SK-N-SH (cell line): ENCODE measurements at regions of chr1 and their contacts with region 1.

Region 1: GRCh38 chr1:201511941-201512539 is 5.1 kb upstream of the CSRP1 start:
- DNase-seq: peak; percentile 44
- H3K4me3 ChIP-seq: no peak overlapping the region
- H3K27ac ChIP-seq: no peak overlapping the region
- H3K4me1 ChIP-seq: peaks cover 14 to 15% of the 10 kb centered on the region in 2 experiments; a peak in 2 of 4 replicates
- H3K27me3 ChIP-seq: no peaks in the 10 kb centered on the region
- CTCF ChIP-seq: no peak
- EP300 ChIP-seq: no peak
- RAD21 ChIP-seq: no peak

Region 2: GRCh38 chr1:201184307-201185122 is 327.5 kb before region 1 on chr1:
- CTCF ChIA-PET with region 1: no interaction called
- POLR2A ChIA-PET with region 1: no interaction called
- DNase-seq: peak; percentile 77
- H3K4me3 ChIP-seq: no peak overlapping the region
- H3K27ac ChIP-seq: peak overlapping the region; percentile 2 to 19; a peak in 3 of 4 replicates
- H3K4me1 ChIP-seq: peaks cover 10 to 16% of the 10 kb centered on the region in 2 experiments; a peak in 3 of 4 replicates
- H3K27me3 ChIP-seq: no peaks in the 10 kb centered on the region
- CTCF ChIP-seq: peak; percentile 73
- EP300 ChIP-seq: no peak
- RAD21 ChIP-seq: peak; percentile 69

Region 3: DNA sequence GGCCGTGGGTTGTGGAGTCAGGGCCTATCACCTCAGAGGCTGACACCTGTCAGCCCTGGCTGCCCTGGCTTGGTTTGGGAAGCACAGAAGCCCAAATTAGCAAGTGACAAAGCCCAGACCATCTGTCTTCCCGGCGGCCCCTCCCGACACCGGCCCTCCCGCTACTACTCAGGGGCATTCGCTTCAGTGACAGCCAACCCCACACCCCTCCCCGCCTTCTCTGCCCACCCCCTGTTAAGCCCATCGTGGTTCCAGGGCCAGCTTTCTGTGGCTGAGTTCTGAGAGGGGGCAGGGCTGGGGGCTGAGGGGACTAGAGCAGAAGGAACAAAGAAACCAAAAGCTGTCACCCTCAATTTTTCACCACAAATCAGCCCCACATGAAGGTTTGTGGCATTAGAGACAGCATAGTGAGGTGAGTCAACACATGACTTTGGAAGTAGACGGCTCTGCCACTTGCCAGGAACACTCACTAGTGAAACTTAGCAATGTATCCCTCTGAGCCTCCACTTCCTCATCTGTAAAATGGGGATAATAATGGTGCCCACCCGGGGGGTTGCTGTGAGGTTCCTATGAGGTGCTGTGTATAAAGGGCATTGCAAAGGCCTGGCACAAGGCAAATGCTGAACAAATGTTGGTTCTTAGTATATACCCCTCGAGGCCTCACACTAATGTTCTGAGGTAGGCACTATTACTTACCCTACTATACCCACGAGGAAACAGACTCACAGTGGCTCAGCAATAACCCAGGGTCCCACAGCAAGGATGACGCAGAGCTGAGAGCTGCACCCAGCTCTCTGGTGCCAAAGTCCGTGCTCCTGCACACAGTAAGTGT is 85.3 kb before region 1 on chr1:
- CTCF ChIA-PET with region 1: interaction called, 85 read pairs
- POLR2A ChIA-PET with region 1: no interaction called
- DNase-seq: peak; percentile 56
- H3K4me3 ChIP-seq: no peak overlapping the region
- H3K27ac ChIP-seq: no peak overlapping the region
- H3K4me1 ChIP-seq: peaks cover 0 to 19% of the 10 kb centered on the region in 2 experiments; a peak in 1 of 4 replicates
- H3K27me3 ChIP-seq: no peaks in the 10 kb centered on the region; the same call in 1 of the 2 replicates
- CTCF ChIP-seq: no peak
- EP300 ChIP-seq: no peak
- RAD21 ChIP-seq: no peak

Region 4: GRCh38 chr1:201447911-201448871 is 63.8 kb before region 1 on chr1:
- CTCF ChIA-PET with region 1: interaction called, 124 read pairs
- POLR2A ChIA-PET with region 1: interaction called, 3 read pairs
- DNase-seq: peak; percentile 80
- H3K4me3 ChIP-seq: no peak overlapping the region; a peak in 1 of 4 replicates
- H3K27ac ChIP-seq: no peak overlapping the region
- H3K4me1 ChIP-seq: peaks cover 9 to 27% of the 10 kb centered on the region in 2 experiments; a peak in 3 of 4 replicates
- H3K27me3 ChIP-seq: no peaks in the 10 kb centered on the region
- CTCF ChIP-seq: peak; percentile 76
- EP300 ChIP-seq: no peak
- RAD21 ChIP-seq: peak; percentile 61

Region 5: DNA sequence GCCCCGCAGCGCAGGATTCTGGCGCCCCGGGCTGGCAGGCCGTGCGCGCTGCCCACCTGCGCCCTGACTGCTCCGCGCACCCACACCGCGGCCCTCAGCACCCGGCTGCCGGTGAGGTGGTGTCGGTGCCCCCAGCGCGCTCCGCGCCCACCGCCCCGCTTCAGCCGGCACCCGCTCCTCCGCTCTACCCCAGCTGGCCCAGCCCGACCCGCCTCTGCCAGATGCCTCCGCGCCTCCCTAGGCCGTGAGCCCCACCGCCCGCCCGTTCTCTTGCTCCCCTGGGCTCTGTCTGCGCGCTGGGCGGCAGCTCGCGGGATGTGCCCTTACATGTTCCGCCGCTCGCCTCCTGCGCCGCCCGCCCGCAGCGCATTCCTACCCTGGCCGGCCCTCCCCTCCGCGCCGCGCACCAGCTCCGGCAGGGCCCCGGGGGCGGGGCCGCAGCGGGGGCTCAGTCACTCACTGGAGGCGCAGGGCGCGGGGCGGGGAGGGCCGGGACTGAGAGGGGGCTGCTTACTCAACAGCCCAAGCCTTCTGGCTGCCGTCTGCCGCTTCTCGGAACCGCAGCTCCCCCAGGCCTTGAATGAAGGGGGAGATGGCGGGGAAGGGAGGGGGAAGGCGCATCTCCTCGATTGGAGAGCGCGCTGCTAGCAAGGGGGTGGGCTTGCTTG is 43.1 kb before region 1 on chr1 and contains the start of gene PHLDA3:
- CTCF ChIA-PET with region 1: interaction called, 46 read pairs
- POLR2A ChIA-PET with region 1: interaction called, 3 read pairs
- DNase-seq: peak; percentile 93
- H3K4me3 ChIP-seq: peak within 1 kb of the TSS; percentile 77 to 82
- H3K27ac ChIP-seq: peak within 1 kb of the TSS; percentile 83 to 94
- H3K4me1 ChIP-seq: peaks cover 13 to 29% of the 10 kb centered on the region in 2 experiments; a peak in 3 of 4 replicates
- H3K27me3 ChIP-seq: no peaks in the 10 kb centered on the region
- CTCF ChIP-seq: no peak
- EP300 ChIP-seq: no peak
- RAD21 ChIP-seq: no peak
- polyA plus RNA-seq, gene PHLDA3: 105 and 108 TPM in 2 replicates

Region 6: DNA sequence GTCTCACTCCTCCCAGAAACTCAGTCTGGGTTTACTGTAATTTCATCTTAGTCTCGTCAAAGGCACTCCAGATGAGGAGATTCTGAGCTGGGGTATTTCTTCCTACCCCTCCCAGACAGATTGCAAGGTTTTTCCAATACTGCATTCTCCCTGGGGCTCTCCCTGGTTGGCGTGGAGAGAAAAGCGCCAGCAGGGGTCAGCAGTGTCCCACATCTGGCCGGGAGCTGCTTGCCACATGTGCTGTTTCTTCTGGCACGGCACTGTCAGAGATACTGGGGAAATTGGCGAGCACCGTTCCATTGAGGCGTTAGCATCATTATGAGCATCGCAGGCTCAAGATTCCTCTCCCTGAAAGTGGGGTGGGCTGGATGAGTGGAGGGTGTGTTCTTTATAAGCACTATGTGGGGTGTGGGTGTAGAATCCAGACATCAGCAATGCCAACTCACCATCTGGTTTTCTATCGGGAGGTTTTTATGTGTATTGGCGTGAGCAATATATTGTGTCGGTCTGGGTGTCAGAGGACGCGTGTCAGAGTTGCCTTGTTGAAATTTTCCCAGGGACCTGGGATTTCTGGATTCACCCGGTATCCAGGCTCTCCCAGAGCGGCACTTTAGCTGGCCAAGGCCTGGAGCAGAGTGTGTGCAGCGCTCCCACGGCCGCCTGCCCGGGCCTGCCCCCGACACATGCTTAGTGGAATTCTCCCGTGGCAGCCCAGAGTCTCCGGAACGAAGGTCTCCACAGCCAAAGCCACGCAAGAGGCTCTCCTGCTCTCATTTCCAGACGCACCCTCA is 18.9 kb after region 1 on chr1:
- CTCF ChIA-PET with region 1: interaction called, 129 read pairs
- POLR2A ChIA-PET with region 1: no interaction called
- DNase-seq: peak; percentile 89
- H3K4me3 ChIP-seq: no peak overlapping the region
- H3K27ac ChIP-seq: peak overlapping the region in 1 of 2 experiments; percentile 62; a peak in 2 of 4 replicates
- H3K4me1 ChIP-seq: peaks cover 11 to 36% of the 10 kb centered on the region in 2 experiments; a peak in 3 of 4 replicates
- H3K27me3 ChIP-seq: no peaks in the 10 kb centered on the region
- CTCF ChIP-seq: peak; percentile 90
- EP300 ChIP-seq: no peak
- RAD21 ChIP-seq: peak; percentile 93

Region 7: GRCh38 chr1:201813226-201813625 is 301.2 kb after region 1 on chr1:
- CTCF ChIA-PET with region 1: interaction called, 11 read pairs
- POLR2A ChIA-PET with region 1: no interaction called
- DNase-seq: no peak
- H3K4me3 ChIP-seq: no peak overlapping the region
- H3K27ac ChIP-seq: no peak overlapping the region
- H3K4me1 ChIP-seq: no peaks in the 10 kb centered on the region
- H3K27me3 ChIP-seq: no peaks in the 10 kb centered on the region
- CTCF ChIP-seq: no peak
- EP300 ChIP-seq: no peak
- RAD21 ChIP-seq: no peak

Region 8: GRCh38 chr1:202122639-202123335 is 610.7 kb after region 1 on chr1 and contains the start of gene GPR37L1:
- CTCF ChIA-PET with region 1: no interaction called
- POLR2A ChIA-PET with region 1: no interaction called
- DNase-seq: peak; percentile 91
- H3K4me3 ChIP-seq: no peak within 1 kb of the TSS
- H3K27ac ChIP-seq: no peak within 1 kb of the TSS
- H3K4me1 ChIP-seq: peaks cover 0 to 9% of the 10 kb centered on the region in 2 experiments; a peak in 1 of 4 replicates
- H3K27me3 ChIP-seq: no peaks in the 10 kb centered on the region
- CTCF ChIP-seq: peak; percentile 51
- EP300 ChIP-seq: no peak
- RAD21 ChIP-seq: peak; percentile 58
- polyA plus RNA-seq, gene GPR37L1: not detected in 2 replicates